ENCODE measurements at regions of chr6 and their contacts with region 1.

Region 1: GRCh38 chr6:87929843-87930288 is 117.8 kb upstream of the SPACA1 start:
- DNase-seq: peak; percentile 84
- H3K4me3 Mint-ChIP-seq: no peak overlapping the region
- H3K27ac Mint-ChIP-seq: no peak overlapping the region
- H3K4me1 Mint-ChIP-seq: peaks cover 22% of the 10 kb centered on the region
- H3K27me3 Mint-ChIP-seq: no peaks in the 10 kb centered on the region
- CTCF ChIP-seq: peak; percentile 52

Region 2: DNA sequence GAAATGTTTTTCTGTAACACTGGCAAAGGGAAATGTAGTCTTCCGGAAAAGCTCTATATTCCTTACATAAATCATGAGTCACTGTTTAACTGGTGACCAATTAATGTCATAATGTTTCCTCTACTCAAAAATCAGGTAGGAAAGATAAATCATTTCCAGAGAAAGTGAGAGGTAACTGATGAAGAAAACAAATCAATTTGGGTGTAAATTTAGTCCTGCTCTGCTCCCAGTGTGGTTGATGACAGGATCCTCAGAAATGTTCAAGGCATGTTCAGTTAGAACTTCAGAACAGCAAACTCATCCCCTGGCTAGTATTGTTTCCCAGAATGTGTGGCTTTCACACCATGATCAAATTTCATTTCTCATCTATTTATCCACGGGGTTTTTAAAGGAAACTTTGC is 79.0 kb after region 1 on chr6:
- CTCF ChIA-PET with region 1: no interaction called
- intact Hi-C with region 1: loop called (anchors 5 kb)
- DNase-seq: no peak
- H3K4me3 Mint-ChIP-seq: peak overlapping the region; percentile 65
- H3K27ac Mint-ChIP-seq: peak overlapping the region; percentile 86
- H3K4me1 Mint-ChIP-seq: peaks cover 35% of the 10 kb centered on the region
- H3K27me3 Mint-ChIP-seq: no peaks in the 10 kb centered on the region
- CTCF ChIP-seq: no peak

Region 3: GRCh38 chr6:88238065-88238464 is 308.2 kb after region 1 on chr6:
- CTCF ChIA-PET with region 1: no interaction called
- intact Hi-C with region 1: loop called (anchors 1 kb)
- DNase-seq: peak; percentile 38
- H3K4me3 Mint-ChIP-seq: no peak overlapping the region
- H3K27ac Mint-ChIP-seq: no peak overlapping the region
- H3K4me1 Mint-ChIP-seq: no peaks in the 10 kb centered on the region
- H3K27me3 Mint-ChIP-seq: no peaks in the 10 kb centered on the region
- CTCF ChIP-seq: no peak

Region 4: GRCh38 chr6:88780714-88781389 is 851.0 kb after region 1 on chr6:
- CTCF ChIA-PET with region 1: no interaction called
- intact Hi-C with region 1: loop called (anchors 5 kb)
- DNase-seq: peak; percentile 58
- H3K4me3 Mint-ChIP-seq: no peak overlapping the region
- H3K27ac Mint-ChIP-seq: no peak overlapping the region
- H3K4me1 Mint-ChIP-seq: no peaks in the 10 kb centered on the region
- H3K27me3 Mint-ChIP-seq: no peaks in the 10 kb centered on the region
- CTCF ChIP-seq: peak; percentile 63

Measured in Calu3 (cell line).